ENCODE measurements at regions of chr1 and their contacts with region 1.

Region 1: GRCh38 chr1:173195596-173196088 is 11.5 kb downstream of the TNFSF4 start:
- DNase-seq: peak; percentile 12
- H3K4me3 Mint-ChIP-seq: no peak overlapping the region
- H3K27ac Mint-ChIP-seq: peak overlapping the region; percentile 57
- H3K4me1 Mint-ChIP-seq: peaks cover 17% of the 10 kb centered on the region
- H3K27me3 Mint-ChIP-seq: peaks cover 33% of the 10 kb centered on the region

Region 2: DNA sequence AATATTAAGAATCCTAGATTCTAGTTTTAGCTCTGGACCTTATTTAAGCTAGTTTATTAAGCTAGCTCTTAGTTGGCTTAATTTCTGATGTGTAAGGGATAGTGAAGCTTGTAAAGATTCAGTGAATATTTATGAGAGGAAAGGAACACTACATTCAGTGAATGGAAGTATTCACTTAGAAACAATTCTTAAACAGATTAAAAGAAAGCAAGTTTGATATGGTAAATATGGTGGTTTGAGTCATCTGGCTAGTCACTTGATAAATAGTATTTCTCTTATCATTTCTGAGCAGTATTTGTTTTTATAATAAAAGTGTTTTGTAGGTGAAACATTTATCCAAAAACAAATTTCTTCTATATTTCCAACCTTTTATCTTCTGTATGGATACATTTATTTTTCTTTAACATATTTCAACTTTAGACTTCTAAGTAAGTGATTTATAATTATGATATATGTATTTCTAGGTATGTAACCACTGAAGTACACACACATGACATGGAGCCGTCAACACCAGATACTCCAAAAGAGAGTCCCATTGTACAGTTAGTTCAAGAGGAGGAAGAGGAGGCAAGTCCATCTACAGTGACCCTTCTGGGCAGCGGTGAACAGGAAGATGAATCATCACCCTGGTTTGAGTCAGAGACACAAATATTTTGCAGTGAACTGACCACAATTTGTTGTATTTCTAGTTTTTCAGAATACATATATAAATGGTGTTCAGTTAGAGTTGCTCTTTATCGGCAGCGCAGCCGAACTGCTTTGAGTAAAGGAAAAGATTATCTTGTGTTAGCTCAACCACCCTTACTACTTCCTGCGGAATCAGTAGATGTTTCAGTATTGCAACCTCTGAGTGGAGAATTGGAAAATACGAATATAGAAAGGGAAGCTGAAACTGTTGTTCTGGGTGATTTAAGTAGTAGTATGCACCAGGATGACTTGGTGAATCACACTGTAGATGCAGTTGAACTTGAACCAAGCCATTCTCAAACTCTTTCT is 607.0 kb before region 1 on chr1:
- intact Hi-C with region 1: loop called (anchors 5 kb)
- DNase-seq: no peak
- H3K4me3 Mint-ChIP-seq: no peak overlapping the region
- H3K27ac Mint-ChIP-seq: peak overlapping the region; percentile 72
- H3K4me1 Mint-ChIP-seq: peaks cover 28% of the 10 kb centered on the region
- H3K27me3 Mint-ChIP-seq: no peaks in the 10 kb centered on the region

Region 3: DNA sequence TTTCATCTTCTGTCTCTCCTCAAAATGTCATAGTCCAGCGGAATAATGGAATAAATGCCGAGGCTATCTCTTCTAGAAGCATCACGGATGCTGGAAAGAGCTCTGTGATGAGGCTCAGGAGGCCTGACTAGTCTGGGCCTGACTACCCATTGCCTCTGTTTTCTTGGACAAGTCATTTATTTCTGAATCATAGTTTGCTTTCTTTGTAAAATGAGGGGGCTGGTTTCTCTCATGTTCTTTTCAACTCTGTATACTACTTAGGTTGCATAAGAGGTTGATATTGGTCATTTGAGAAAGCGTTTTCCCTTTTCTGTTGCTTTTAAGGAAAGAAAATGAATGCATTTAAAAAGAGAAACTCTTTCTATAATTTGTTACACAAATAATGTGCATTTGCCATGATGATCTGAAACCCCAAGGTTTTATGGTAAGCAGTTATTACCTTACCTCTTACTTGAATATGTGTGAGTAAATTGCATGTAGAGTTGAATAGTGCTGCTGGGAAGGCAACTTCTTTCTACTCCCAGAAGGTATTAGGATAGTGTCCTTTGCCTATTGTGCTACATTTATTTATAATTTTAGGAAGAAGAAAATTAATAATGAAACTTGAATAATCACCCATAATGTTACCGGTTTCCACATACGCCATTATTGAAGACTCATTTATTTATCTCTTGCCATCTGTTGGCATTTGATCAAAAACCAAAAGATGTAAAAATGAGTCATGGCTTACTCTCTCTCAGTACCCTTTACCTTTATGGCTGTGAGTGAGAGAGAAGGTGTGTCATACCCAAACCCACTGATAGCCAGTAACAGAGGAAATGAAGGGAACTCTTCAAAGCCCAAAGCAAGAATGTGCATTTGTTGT is 357.6 kb before region 1 on chr1:
- intact Hi-C with region 1: loop called (anchors 1 kb)
- DNase-seq: no peak
- H3K4me3 Mint-ChIP-seq: no peak overlapping the region
- H3K27ac Mint-ChIP-seq: no peak overlapping the region
- H3K4me1 Mint-ChIP-seq: peaks cover 29% of the 10 kb centered on the region
- H3K27me3 Mint-ChIP-seq: peaks cover 53% of the 10 kb centered on the region

Region 4: GRCh38 chr1:172969611-172970010 is 226.0 kb before region 1 on chr1:
- intact Hi-C with region 1: loop called (anchors 5 kb)
- DNase-seq: no peak
- H3K4me3 Mint-ChIP-seq: no peak overlapping the region
- H3K27ac Mint-ChIP-seq: no peak overlapping the region
- H3K4me1 Mint-ChIP-seq: peaks cover 14% of the 10 kb centered on the region
- H3K27me3 Mint-ChIP-seq: peaks cover 31% of the 10 kb centered on the region

Region 5: DNA sequence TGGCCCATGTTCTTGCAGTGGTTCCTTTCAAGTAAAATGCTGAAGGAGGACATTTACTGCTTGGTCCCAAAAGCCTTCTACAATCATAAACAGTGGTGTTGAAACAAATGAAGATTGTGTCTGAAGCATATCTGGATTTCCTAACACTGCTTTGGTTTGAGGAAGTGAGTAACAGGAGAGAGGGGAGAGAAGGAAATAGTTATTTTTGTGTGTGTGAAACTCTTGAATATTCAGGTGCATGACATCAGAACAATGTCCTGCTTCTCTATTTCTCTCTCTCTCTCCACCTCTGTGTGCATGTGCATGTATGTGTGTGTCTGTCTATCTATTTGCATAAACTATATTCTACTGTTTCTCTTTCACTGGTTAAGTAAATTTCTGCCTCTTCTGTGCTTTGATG is 83.5 kb before region 1 on chr1:
- intact Hi-C with region 1: no loop called
- DNase-seq: no peak
- H3K4me3 Mint-ChIP-seq: no peak overlapping the region
- H3K27ac Mint-ChIP-seq: no peak overlapping the region
- H3K4me1 Mint-ChIP-seq: no peaks in the 10 kb centered on the region
- H3K27me3 Mint-ChIP-seq: no peaks in the 10 kb centered on the region

Region 6: DNA sequence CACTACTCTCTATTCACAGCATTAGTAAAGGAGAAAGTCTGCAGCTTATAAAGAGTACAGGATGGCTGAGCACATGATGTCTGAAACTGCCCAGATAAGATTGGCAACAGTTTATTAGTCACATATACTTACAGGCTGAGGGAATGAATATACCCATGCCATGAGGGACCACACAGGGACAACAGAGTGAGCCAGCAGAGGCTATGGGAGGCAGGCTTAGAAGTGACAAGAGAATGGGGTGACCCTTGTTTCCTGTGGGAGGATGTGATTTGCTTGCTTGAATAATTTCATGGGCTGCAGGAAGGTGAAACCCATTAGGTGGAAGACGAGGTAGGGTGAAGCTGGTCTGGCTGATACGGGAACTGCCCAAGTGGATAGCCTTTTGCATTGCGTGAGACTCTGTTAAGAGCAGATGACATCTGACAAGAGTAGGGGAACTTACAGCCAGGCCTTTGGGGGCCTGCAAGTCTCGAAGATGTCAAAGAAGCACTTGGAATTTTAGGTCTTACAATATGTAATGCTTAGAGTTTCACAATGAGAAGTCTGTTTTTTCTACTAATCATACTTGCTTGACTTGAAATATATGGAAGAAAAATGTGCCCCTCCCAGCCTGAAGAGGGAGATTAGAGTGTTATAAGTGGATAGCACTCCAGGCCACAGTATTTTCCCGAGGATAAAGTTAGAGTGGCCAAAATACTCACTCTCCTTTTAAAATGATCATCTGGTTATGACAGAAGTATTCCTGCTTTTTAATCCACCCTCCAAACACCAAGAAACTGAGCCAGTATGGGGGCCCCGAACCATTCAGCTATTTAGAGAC is 46.1 kb after region 1 on chr1:
- intact Hi-C with region 1: no loop called
- DNase-seq: no peak
- H3K4me3 Mint-ChIP-seq: no peak overlapping the region
- H3K27ac Mint-ChIP-seq: no peak overlapping the region
- H3K4me1 Mint-ChIP-seq: no peaks in the 10 kb centered on the region
- H3K27me3 Mint-ChIP-seq: no peaks in the 10 kb centered on the region

Region 7: GRCh38 chr1:173297798-173298391 is 102.3 kb after region 1 on chr1:
- intact Hi-C with region 1: loop called (anchors 1 kb)
- DNase-seq: no peak
- H3K4me3 Mint-ChIP-seq: no peak overlapping the region
- H3K27ac Mint-ChIP-seq: peak overlapping the region; percentile 2
- H3K4me1 Mint-ChIP-seq: peaks cover 28% of the 10 kb centered on the region
- H3K27me3 Mint-ChIP-seq: peaks cover 37% of the 10 kb centered on the region